ENCODE measurements at regions of chr5 and their contacts with region 1.

Region 1: DNA sequence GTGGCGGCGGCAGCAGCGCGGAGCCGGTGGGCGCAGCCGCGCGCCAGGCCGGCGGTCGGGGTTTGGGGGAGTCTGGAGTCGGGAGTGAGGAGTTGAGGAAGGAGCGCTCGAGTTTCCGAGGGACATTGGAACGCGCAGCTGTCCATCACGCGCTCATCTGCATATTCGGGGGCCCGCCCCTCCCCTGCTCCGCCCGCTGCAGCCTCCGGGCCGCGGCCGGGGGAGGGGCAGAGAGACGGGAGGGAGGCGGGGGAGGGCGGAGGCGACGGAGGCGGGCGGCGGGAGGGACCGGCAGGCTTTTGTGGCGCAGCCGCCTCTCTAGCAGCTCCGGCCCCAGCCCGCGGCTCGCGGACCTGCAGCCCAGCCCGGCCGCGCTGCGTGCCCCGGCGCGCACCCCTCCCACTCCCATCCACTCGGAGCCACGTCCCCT is at the start of gene IRX2:
- DNase-seq: peak; percentile 96
- H3K4me3 ChIP-seq: peak within 1 kb of the TSS; percentile 84 to 94 (median 91)
- H3K27ac ChIP-seq: peak within 1 kb of the TSS; percentile 87
- H3K4me1 ChIP-seq: peaks cover 42% of the 10 kb centered on the region
- H3K27me3 ChIP-seq: no peaks in the 10 kb centered on the region
- CTCF ChIP-seq: no peak
- total RNA-seq, gene IRX2: 41.5 to 69.0 TPM

Region 2: DNA sequence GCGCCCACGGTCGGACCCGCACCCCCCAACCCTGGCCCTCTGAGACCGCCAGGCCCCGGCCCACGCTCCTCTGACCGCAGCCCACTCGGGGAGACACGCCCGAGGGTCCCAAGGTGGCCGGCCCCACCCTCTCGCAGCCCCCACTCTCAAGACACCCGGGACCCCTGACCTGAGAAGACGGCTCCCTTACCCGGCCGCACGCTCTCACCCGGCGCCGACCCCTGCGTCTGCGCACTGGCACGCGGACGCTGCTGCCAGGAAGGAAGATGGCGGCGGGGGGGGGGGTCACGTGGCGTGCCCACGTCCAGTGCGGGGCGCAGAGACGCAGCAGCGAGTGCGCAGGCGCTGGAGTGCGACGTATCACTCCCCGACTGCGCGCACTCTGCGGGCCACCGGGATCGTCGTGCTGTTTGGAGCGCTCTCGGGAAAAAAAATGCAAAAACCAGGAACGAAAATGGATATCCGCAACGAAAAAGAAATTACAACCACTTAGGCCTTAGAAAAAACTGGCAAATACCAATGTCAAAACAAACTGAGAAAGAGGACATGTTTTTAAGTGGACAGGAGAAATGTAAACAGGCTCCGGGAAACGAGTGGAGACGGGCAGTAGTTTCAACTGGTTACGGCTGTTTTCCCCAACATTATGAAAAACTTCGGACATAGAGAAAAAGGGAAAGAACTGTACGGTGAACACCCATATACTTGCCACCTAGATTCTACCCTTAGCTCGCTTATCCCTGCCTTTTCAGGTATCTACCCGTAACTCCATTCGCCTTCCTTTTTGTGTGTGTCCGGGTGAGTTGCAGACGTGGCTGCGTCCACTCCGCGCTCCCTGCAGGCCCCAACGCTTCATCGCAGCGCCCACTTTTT is 951.8 kb before region 1 on chr5 and contains the start of gene MRPL36:
- CTCF ChIA-PET with region 1: no interaction called
- dilution Hi-C with region 1: no loop called
- in situ Hi-C with region 1: no loop called
- intact Hi-C with region 1: loop called (anchors 5 kb)
- DNase-seq: peak; percentile 87
- H3K4me3 ChIP-seq: peak within 1 kb of the TSS; percentile 69 to 86 (median 74)
- H3K27ac ChIP-seq: peak within 1 kb of the TSS; percentile 59
- H3K4me1 ChIP-seq: peaks cover 20% of the 10 kb centered on the region
- H3K27me3 ChIP-seq: no peaks in the 10 kb centered on the region
- CTCF ChIP-seq: no peak
- total RNA-seq, gene MRPL36: 47.2 to 82.2 TPM

Region 3: DNA sequence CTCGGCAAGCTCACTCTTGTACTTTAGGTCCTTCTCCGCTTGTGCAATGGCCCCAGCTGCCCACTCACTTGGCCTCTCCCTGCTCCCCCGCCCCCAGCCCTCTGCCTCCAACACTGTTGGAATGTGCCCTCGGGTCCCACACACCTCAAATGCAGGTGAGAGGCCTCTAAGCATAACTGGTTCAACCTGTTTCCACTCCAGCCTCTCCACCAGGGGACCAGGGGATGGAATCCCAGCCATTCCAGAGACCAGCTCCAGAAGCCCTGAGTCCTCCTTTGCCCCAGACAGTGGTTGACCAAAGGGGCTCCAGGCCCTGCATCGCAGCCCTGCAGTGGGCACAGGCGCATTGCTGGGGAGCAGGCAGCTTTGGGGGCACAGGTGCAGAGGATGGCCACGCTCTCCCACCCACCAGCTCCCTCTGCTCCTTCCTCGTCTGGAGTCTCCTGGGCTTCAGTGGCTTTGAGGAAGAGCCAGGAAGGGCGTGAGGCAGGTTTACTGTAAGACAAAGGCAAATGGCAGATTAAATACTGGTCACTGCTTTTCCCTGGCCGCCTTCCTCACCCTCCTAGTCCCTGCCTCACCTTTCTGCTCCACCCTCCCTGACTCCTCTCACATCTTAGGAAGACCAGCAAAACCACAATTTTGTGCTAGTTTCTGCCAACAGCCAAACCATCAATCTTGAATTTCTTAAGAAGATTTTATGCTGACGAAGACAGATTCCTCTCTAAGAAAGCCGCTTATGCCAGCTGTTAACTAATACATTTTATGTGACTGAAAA is 29.0 kb after region 1 on chr5:
- CTCF ChIA-PET with region 1: interaction called, 3 read pairs
- dilution Hi-C with region 1: no loop called
- in situ Hi-C with region 1: no loop called
- intact Hi-C with region 1: loop called (anchors 1 kb)
- DNase-seq: peak; percentile 87
- H3K4me3 ChIP-seq: no peak overlapping the region
- H3K27ac ChIP-seq: peak overlapping the region; percentile 64
- H3K4me1 ChIP-seq: peaks cover 22% of the 10 kb centered on the region
- H3K27me3 ChIP-seq: no peaks in the 10 kb centered on the region
- CTCF ChIP-seq: peak in 1 of 2 donors; percentile 40

Region 4: GRCh38 chr5:2848651-2849050 is 97.0 kb after region 1 on chr5:
- CTCF ChIA-PET with region 1: no interaction called
- dilution Hi-C with region 1: no loop called
- in situ Hi-C with region 1: no loop called
- intact Hi-C with region 1: loop called (anchors 2 kb)
- DNase-seq: peak; percentile 5
- H3K4me3 ChIP-seq: no peak overlapping the region
- H3K27ac ChIP-seq: no peak overlapping the region
- H3K4me1 ChIP-seq: peaks cover 5% of the 10 kb centered on the region
- H3K27me3 ChIP-seq: no peaks in the 10 kb centered on the region
- CTCF ChIP-seq: peak; percentile 20 to 54

Region 5: GRCh38 chr5:3310541-3311261 is 559.1 kb after region 1 on chr5:
- CTCF ChIA-PET with region 1: no interaction called
- dilution Hi-C with region 1: loop called (anchors 10 kb)
- in situ Hi-C with region 1: loop called in 1 of 2 experiments (anchors 25 kb)
- intact Hi-C with region 1: loop called (anchors 2 kb)
- DNase-seq: peak; percentile 99
- H3K4me3 ChIP-seq: no peak overlapping the region
- H3K27ac ChIP-seq: peak overlapping the region; percentile 98
- H3K4me1 ChIP-seq: peaks cover 25% of the 10 kb centered on the region
- H3K27me3 ChIP-seq: no peaks in the 10 kb centered on the region
- CTCF ChIP-seq: no peak

Region 6: GRCh38 chr5:4082966-4083564 is 1331.5 kb after region 1 on chr5:
- CTCF ChIA-PET with region 1: no interaction called
- dilution Hi-C with region 1: no loop called
- in situ Hi-C with region 1: no loop called
- intact Hi-C with region 1: loop called (anchors 2 kb)
- DNase-seq: peak; percentile 94
- H3K4me3 ChIP-seq: no peak overlapping the region
- H3K27ac ChIP-seq: peak overlapping the region; percentile 96
- H3K4me1 ChIP-seq: peaks cover 43% of the 10 kb centered on the region
- H3K27me3 ChIP-seq: no peaks in the 10 kb centered on the region
- CTCF ChIP-seq: no peak